ENCODE measurements at regions of chr2 and their contacts with region 1.

Region 1: GRCh38 chr2:101151141-101151858 is at the start of gene TBC1D8:
- DNase-seq: peak; percentile 93 to 96 (median 95)
- ATAC-seq: peak; percentile 85 to 91 (median 88)
- H3K4me3 ChIP-seq: peak within 1 kb of the TSS; percentile 72 to 95 (median 84)
- H3K27ac ChIP-seq: peak within 1 kb of the TSS; percentile 57 to 97 (median 92)
- H3K4me1 ChIP-seq: peaks cover 3 to 78% (median 59%) of the 10 kb centered on the region in 12 donors
- H3K27me3 ChIP-seq: no peaks in the 10 kb centered on the region
- CTCF ChIP-seq: peak in 1 of 12 donors; percentile 15
- POLR2A ChIP-seq: peak; percentile 50 to 95
- total RNA-seq, gene TBC1D8: 36.9 to 61.7 (median 53.3) TPM

Region 2: GRCh38 chr2:100610381-100610831 is 540.9 kb before region 1 on chr2:
- intact Hi-C with region 1: loop called in 3 of 10 experiments (anchors 2 to 10 kb)
- DNase-seq: peak; percentile 55 to 83 (median 65)
- ATAC-seq: peak; percentile 28 to 85 (median 78)
- H3K4me3 ChIP-seq: no peak overlapping the region
- H3K27ac ChIP-seq: no peak overlapping the region
- H3K4me1 ChIP-seq: peaks cover 0 to 2% (median 0%) of the 10 kb centered on the region in 12 donors
- H3K27me3 ChIP-seq: no peaks in the 10 kb centered on the region
- CTCF ChIP-seq: peak; percentile 43 to 73 (median 56)
- POLR2A ChIP-seq: no peak

Region 3: GRCh38 chr2:101030863-101031554 is 120.3 kb before region 1 on chr2:
- intact Hi-C with region 1: loop called in 8 of 10 experiments (anchors 2 to 5 kb)
- DNase-seq: peak in 3 of 5 donors; percentile 32 to 71 (median 39)
- ATAC-seq: peak; percentile 87 to 95 (median 92)
- H3K4me3 ChIP-seq: no peak overlapping the region
- H3K27ac ChIP-seq: peak overlapping the region in 7 of 12 donors; percentile 9 to 73 (median 37)
- H3K4me1 ChIP-seq: peaks cover 0 to 19% (median 0%) of the 10 kb centered on the region in 12 donors
- H3K27me3 ChIP-seq: no peaks in the 10 kb centered on the region
- CTCF ChIP-seq: peak in 8 of 12 donors; percentile 8 to 45 (median 16)
- POLR2A ChIP-seq: no peak

Region 4: DNA sequence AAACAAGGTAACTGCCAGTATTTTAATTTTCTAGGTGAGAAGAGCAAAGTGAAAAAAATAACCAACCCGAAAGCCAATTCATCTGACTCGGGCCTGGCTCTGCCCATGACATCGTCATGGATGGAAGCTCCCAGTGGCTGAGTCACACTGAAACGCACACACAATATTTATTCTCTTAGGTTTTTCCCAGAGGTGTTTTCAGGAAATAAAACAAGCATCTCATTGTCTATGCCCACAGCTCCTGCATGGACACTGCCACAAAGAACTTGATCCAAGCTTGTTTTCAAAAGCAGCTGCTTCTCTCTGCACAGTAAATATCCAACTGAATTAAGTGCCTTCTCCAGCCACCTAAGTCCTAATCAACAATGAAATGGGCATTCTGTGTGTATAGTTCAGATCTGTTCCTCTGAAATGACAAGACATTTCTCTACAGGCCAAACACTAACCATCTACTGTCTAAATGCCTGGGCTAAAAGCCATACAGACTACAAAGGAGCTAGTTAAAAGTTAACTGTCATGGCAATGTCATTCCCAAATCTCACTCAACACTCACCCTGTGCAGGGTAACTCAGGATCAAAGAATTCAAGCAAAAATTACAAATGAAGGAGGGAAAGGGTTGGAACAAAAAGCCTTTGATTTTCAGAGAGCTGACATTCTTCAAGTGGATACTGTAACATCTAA is 86.3 kb before region 1 on chr2:
- intact Hi-C with region 1: loop called in 2 of 10 experiments (anchors 5 kb)
- DNase-seq: no peak
- ATAC-seq: peak in 3 of 4 donors; percentile 38 to 60 (median 40)
- H3K4me3 ChIP-seq: no peak overlapping the region
- H3K27ac ChIP-seq: peak overlapping the region in 8 of 12 donors; percentile 0 to 59 (median 46)
- H3K4me1 ChIP-seq: peaks cover 0 to 60% (median 31%) of the 10 kb centered on the region in 12 donors
- H3K27me3 ChIP-seq: no peaks in the 10 kb centered on the region
- CTCF ChIP-seq: no peak
- POLR2A ChIP-seq: no peak

Region 5: DNA sequence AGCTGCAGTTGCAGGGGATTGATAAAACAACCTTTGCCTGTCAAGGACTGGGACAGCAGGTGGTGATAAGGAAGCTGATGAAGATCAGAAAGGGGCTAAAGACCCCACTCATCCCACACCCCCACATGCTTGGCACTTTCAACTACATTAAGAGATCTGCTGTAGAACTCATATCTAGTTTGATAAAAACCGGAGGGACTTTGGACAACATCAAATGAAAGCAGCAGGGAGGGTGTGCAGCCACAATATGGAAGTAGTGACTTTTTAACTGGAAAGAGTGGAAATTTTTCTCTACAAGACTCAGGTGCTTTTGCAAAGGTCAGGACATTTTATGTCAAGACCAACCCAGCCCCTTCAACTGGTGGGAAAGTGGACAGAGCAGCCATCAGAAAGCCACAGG is 56.9 kb before region 1 on chr2:
- intact Hi-C with region 1: no loop called
- DNase-seq: no peak
- ATAC-seq: no peak
- H3K4me3 ChIP-seq: no peak overlapping the region
- H3K27ac ChIP-seq: no peak overlapping the region
- H3K4me1 ChIP-seq: peaks cover 0 to 31% (median 2%) of the 10 kb centered on the region in 12 donors
- H3K27me3 ChIP-seq: no peaks in the 10 kb centered on the region
- CTCF ChIP-seq: no peak
- POLR2A ChIP-seq: no peak

Region 6: DNA sequence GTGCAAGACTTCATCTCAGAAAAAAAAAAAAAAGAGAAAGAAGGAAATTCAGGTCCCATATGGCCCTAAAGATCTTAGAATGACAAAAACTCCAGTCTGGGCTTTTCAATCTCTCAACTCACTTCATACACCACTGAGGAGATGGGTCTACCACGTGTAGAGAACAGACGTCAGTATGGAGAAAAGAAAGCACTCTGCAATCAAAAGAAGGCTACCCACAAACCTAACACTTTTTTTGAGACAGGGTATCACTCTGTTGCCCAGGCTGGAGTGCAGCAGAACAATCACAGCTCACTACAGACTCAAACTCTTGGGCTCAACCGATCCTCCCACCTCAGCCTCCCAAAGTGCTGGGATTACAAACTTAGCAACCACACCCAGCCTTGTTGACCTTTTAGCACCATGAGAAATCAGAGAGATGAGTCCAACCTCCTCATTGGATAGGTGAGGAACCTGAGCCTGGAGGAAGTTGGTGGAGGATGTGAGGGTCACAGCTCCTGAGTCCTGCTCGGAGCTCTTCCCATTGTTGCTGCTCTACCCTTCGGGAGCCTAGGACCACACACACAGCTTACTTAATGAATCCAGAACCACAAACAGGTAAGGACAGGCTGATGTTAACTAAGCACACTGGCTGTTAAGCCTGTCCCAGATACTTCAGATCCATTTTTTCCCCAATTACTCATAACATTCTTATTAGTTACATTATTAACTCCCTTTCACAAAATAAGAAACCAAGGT is 23.8 kb before region 1 on chr2:
- intact Hi-C with region 1: loop called in 1 of 10 experiments (anchors 2 kb)
- DNase-seq: no peak
- ATAC-seq: no peak
- H3K4me3 ChIP-seq: no peak overlapping the region
- H3K27ac ChIP-seq: peak overlapping the region in 2 of 12 donors; percentile 7 to 8
- H3K4me1 ChIP-seq: peaks cover 17 to 78% (median 40%) of the 10 kb centered on the region in 12 donors
- H3K27me3 ChIP-seq: no peaks in the 10 kb centered on the region
- CTCF ChIP-seq: no peak
- POLR2A ChIP-seq: no peak

Region 7: DNA sequence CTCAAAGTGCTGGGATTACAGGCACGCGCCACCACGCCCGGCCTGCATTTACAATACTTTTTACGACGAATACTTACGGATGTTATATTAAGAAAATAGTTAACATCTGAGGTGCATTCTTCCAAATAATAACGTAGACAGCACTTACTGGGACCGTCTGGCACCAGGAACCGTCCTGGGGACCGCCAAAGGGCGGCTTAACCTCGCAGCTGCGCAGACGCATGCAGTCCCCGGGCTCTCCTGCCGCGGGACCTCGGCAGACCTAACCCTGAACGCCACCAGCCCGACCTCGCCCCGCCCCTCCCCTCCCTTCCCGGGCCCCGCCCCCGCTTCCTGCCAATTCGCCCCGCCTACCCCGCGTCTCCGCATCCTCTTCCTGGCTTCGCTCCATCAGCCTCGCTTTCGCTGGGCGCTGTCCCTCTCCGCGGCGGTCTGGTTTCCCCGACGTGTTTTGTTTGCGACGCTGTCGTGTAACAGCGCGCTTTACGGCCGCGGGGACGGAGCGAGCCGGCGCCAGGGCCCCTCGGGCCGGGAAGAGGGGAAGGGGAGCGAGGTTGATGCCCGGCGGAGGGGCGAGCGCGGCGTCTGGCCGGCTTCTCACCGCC is 101.2 kb after region 1 on chr2 and contains the start of gene CNOT11:
- intact Hi-C with region 1: loop called in 1 of 10 experiments (anchors 5 kb)
- DNase-seq: peak; percentile 99 to 100 (median 100)
- ATAC-seq: peak; percentile 95 to 97 (median 96)
- H3K4me3 ChIP-seq: peak within 1 kb of the TSS; percentile 87 to 100 (median 96)
- H3K27ac ChIP-seq: peak within 1 kb of the TSS; percentile 82 to 98 (median 95)
- H3K4me1 ChIP-seq: peaks cover 0 to 41% (median 28%) of the 10 kb centered on the region in 12 donors
- H3K27me3 ChIP-seq: no peaks in the 10 kb centered on the region
- CTCF ChIP-seq: peak in 3 of 12 donors; percentile 2 to 7 (median 3)
- POLR2A ChIP-seq: peak in 1 of 2 donors; percentile 73
- total RNA-seq, gene CNOT11: 31.4 to 62.5 (median 44.1) TPM

Measured in heart left ventricle (tissue), 16 donors.